Endothelial cell of umbilical vein (primary cell): ENCODE measurements at regions of chr16 and their contacts with region 1.

Region 1: DNA sequence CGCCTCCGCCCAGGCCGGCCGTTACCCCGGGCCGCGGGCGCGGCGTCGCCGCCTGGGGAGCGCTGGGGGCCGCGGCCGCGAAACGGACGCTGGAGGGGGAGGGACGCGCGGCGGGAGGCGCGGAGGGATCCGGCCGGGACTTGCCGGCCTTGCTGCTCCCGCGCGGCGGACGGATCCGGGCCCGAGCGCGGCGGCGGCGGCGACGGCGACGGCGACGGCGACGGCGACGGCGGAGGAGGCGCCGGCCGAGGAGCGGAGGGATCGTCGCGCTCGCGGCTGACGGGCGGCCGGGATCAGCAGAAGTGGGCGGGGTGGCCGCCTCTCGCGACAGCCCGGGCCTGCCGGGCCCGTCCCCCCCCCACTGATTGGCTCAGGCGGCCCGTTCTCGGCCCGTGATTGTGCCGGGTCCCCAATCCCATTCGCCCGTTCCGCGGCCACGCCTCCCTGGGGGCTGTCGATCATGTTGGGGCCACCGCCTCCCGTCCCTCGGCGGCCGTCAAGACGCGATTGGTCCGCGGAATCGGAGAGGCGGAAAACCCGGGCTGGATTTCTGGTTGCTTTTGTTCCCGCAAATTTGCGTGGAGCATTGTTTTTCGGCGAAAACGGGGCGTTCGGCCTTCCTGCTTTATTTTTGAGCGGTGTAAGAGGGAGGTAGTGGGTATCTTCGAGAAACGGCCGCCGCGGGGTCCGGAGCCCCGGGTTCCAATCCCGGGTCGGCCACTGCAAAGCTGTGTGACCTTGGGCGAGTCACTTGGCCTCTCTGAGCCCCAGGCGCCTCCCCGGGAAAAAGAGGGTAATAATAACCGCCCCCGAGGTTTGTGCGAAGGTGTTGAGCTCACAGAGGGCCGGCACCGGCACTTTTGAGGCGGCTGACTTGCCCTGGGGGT is at the start of gene ZCCHC14:
- DNase-seq: peak; percentile 99
- H3K4me3 ChIP-seq: peak within 1 kb of the TSS in 2 of 3 experiments; percentile 47 to 56
- H3K27ac ChIP-seq: peak within 1 kb of the TSS; percentile 68
- H3K4me1 ChIP-seq: peaks cover 23% of the 10 kb centered on the region
- H3K27me3 ChIP-seq: no peaks in the 10 kb centered on the region
- CTCF ChIP-seq: no peak
- POLR2A ChIP-seq: peak; percentile 73
- total RNA-seq, gene ZCCHC14: 30.9 and 34.0 TPM in 2 replicates

Region 2: GRCh38 chr16:87407511-87408112 is 85.4 kb before region 1 on chr16:
- CTCF ChIA-PET with region 1: no interaction called
- POLR2A ChIA-PET with region 1: no interaction called
- dilution Hi-C with region 1: no loop called
- intact Hi-C with region 1: loop called (anchors 5 kb)
- DNase-seq: peak; percentile 95
- H3K4me3 ChIP-seq: peak overlapping the region in 1 of 3 experiments; percentile 39
- H3K27ac ChIP-seq: peak overlapping the region; percentile 82
- H3K4me1 ChIP-seq: peaks cover 20% of the 10 kb centered on the region
- H3K27me3 ChIP-seq: no peaks in the 10 kb centered on the region
- CTCF ChIP-seq: no peak
- POLR2A ChIP-seq: peak; percentile 28

Region 3: DNA sequence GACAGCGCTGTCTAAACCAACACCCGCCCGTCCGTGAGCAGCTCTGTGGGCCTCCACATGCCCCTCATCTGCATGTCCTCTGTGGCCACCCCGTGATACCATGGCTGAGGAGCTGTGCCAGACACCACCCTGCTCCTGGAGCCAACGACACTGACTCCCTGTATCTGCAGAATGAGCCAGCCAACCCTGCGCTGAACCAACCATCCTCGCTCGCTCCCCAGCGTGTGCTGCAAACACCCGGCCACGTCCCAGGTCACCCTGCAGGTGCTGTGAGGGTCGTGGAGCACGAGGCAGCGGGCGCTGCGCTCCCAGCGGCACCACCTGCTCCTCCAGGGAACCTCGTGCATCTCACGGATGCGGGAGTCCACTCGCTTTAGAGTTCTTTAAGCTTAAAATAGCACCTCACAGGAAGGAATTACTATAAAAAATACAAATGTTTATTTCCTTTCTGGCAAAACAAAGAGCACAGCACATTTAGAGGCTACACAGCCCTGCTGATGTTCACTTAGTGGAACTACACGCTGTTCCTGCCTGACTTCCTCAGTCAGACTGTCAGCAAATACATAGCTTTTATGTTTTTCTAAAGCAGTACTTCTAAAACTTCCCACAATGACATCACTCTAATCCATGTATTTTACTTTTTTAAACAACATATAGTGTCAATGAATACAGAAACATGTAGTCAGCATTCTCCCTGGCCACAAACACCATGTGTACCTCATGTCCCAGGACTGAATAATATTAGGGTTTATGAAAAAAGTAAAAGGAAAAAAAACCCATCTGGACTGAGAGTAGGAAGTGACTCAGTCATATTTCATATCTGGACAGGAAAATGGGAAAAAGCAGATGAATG is 57.4 kb before region 1 on chr16:
- CTCF ChIA-PET with region 1: interaction called, 3 read pairs
- POLR2A ChIA-PET with region 1: no interaction called
- dilution Hi-C with region 1: no loop called
- intact Hi-C with region 1: loop called (anchors 1 kb)
- DNase-seq: peak; percentile 95
- H3K4me3 ChIP-seq: peak overlapping the region in 2 of 3 experiments; percentile 10
- H3K27ac ChIP-seq: peak overlapping the region; percentile 90
- H3K4me1 ChIP-seq: peaks cover 18% of the 10 kb centered on the region
- H3K27me3 ChIP-seq: no peaks in the 10 kb centered on the region
- CTCF ChIP-seq: no peak
- POLR2A ChIP-seq: no peak

Region 4: GRCh38 chr16:87471278-87472141 is 21.5 kb before region 1 on chr16:
- CTCF ChIA-PET with region 1: no interaction called
- POLR2A ChIA-PET with region 1: no interaction called
- dilution Hi-C with region 1: no loop called
- intact Hi-C with region 1: no loop called
- DNase-seq: no peak
- H3K4me3 ChIP-seq: no peak overlapping the region
- H3K27ac ChIP-seq: no peak overlapping the region
- H3K4me1 ChIP-seq: peaks cover 11% of the 10 kb centered on the region
- H3K27me3 ChIP-seq: no peaks in the 10 kb centered on the region
- CTCF ChIP-seq: no peak
- POLR2A ChIP-seq: no peak

Region 5: GRCh38 chr16:87538594-87538993 is 45.6 kb after region 1 on chr16:
- CTCF ChIA-PET with region 1: no interaction called
- POLR2A ChIA-PET with region 1: no interaction called
- dilution Hi-C with region 1: no loop called
- intact Hi-C with region 1: loop called (anchors 1 kb)
- DNase-seq: peak; percentile 87
- H3K4me3 ChIP-seq: no peak overlapping the region
- H3K27ac ChIP-seq: no peak overlapping the region
- H3K4me1 ChIP-seq: peaks cover 11% of the 10 kb centered on the region
- H3K27me3 ChIP-seq: peaks cover 0 to 2% of the 10 kb centered on the region in 2 experiments
- CTCF ChIP-seq: no peak
- POLR2A ChIP-seq: no peak